Naive thymus-derived CD4-positive, alpha-beta T cell (primary cell): ENCODE measurements at regions of chr3 and their contacts with region 1.

Region 1: DNA sequence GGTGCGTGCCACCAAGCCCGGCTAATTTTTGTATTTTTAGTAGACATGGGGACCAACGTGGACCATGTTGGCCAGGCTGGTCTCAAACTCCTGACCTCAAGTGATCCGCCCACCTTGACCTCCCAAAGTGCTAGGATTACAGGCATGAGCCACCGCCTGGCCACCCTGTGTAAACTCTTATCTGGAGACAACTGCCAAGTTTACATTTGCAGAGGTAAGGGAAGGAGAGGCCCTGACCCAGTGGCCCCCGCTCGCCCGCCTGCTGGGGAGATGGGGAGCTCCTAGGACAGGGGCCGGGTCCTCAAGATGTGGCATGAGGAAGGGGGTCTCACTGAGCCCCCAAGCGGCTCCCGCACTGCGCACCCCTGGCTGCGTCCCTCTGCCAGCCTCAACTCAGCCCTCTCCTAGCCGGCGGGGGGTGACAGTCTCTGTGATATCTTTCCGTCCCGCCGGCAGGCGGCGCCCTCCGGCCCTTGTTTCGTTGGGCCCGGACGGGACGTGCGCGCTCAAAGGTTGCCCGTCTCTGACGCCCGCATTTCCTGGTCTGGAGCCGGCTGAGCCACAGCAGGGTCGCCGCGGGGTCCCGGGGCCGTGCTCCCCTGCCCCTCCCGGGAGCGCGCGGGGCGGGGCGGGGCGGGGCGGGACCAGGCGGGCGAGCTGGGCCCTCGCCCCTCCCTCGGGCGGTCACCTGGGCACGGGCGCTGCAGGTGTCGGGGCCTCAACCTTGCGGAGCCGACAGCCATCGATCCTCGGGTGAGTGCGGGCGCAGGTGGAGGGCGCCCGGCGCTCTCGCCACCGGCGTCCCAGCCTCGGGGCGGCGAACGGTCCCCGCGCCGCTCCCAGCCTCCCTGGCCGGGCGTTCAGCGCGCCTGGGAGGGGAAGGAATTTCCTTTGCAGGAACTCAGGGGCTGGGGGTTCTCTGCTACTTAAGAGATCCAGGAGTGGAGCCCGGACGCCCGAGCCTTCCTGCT is at the start of gene GPR160:
- DNase-seq: peak; percentile 67 to 85 (median 80)
- ATAC-seq: peak; percentile 82
- H3K4me3 ChIP-seq: peak within 1 kb of the TSS; percentile 88
- H3K4me3 Mint-ChIP-seq: peak within 1 kb of the TSS; percentile 86 to 93 (median 90)
- H3K27ac ChIP-seq: peak within 1 kb of the TSS; percentile 63
- H3K27ac Mint-ChIP-seq: peak within 1 kb of the TSS; percentile 33 to 92 (median 82)
- H3K4me1 ChIP-seq: peaks cover 15 to 16% of the 10 kb centered on the region in 2 donors
- H3K4me1 Mint-ChIP-seq: peaks cover 24 to 66% (median 49%) of the 10 kb centered on the region in 7 donors
- H3K27me3 ChIP-seq: no peaks in the 10 kb centered on the region
- H3K27me3 Mint-ChIP-seq: peaks cover 0 to 6% (median 0%) of the 10 kb centered on the region in 5 donors
- total RNA-seq, gene GPR160: 6.1 to 44.3 (median 8.7) TPM

Region 2: GRCh38 chr3:169812332-169813235 is 225.2 kb before region 1 on chr3 and contains the starts of genes LRRC34 and LRRIQ4:
- CTCF ChIA-PET with region 1: no interaction called
- POLR2A ChIA-PET with region 1: no interaction called
- intact Hi-C with region 1: loop called (anchors 5 kb)
- DNase-seq: peak; percentile 43 to 72 (median 52)
- ATAC-seq: peak; percentile 72
- H3K4me3 ChIP-seq: peak within 1 kb of the TSS; percentile 85
- H3K4me3 Mint-ChIP-seq: peak within 1 kb of the TSS; percentile 79 to 91 (median 86)
- H3K27ac ChIP-seq: peak within 1 kb of the TSS; percentile 59
- H3K27ac Mint-ChIP-seq: peak within 1 kb of the TSS; percentile 3 to 92 (median 71)
- H3K4me1 ChIP-seq: peaks cover 4 to 6% of the 10 kb centered on the region in 2 donors
- H3K4me1 Mint-ChIP-seq: peaks cover 21 to 40% (median 25%) of the 10 kb centered on the region in 7 donors
- H3K27me3 ChIP-seq: no peaks in the 10 kb centered on the region
- H3K27me3 Mint-ChIP-seq: peaks cover 0 to 18% (median 2%) of the 10 kb centered on the region in 5 donors
- total RNA-seq, gene LRRC34: 0.30 to 3.7 (median 0.42) TPM
- total RNA-seq, gene LRRIQ4: 0.12 TPM in 1 of 5 experiments, not detected in the others

Region 3: DNA sequence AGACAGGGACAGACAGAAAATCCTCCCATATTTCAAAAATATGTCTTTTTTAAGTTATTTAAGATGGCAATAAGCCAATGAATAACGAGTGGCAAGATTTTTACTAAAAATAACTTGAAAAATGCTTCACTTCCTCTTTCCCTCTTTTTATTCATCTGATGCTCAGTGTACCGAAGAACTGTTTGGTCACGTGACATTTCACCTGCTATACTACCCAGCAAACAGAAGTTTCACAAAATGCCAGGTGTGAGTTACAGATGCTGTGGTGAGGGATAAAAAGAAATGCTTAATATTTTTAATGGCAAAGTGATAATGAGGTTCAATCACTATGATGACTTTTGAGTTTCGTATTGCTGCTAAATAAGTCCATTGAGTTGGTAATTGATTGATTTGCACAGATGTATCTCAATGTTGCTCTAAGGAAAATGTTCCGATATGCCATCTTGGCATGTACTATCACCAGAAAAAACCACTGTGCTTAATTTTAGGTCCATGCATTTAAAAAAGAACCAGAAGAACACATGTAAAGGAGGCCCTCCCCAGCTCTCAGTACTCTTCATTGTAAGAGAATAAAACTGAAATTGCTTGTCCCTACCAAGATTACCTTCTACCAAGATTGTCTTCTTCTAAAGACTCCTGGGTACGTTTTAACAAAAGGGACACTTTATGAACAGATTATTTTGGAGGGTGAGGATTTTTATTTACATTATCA is 97.1 kb before region 1 on chr3:
- CTCF ChIA-PET with region 1: no interaction called
- POLR2A ChIA-PET with region 1: no interaction called
- intact Hi-C with region 1: no loop called
- DNase-seq: peak in 3 of 9 donors; percentile 10 to 14 (median 11)
- ATAC-seq: no peak
- H3K4me3 ChIP-seq: no peak overlapping the region
- H3K4me3 Mint-ChIP-seq: peak overlapping the region in 5 of 10 donors; percentile 9 to 52 (median 34)
- H3K27ac ChIP-seq: no peak overlapping the region
- H3K27ac Mint-ChIP-seq: peak overlapping the region in 1 of 9 donors; percentile 38
- H3K4me1 ChIP-seq: no peaks in the 10 kb centered on the region
- H3K4me1 Mint-ChIP-seq: peaks cover 11 to 27% (median 20%) of the 10 kb centered on the region in 7 donors
- H3K27me3 ChIP-seq: no peaks in the 10 kb centered on the region
- H3K27me3 Mint-ChIP-seq: peaks cover 0 to 14% (median 8%) of the 10 kb centered on the region in 5 donors

Region 4: DNA sequence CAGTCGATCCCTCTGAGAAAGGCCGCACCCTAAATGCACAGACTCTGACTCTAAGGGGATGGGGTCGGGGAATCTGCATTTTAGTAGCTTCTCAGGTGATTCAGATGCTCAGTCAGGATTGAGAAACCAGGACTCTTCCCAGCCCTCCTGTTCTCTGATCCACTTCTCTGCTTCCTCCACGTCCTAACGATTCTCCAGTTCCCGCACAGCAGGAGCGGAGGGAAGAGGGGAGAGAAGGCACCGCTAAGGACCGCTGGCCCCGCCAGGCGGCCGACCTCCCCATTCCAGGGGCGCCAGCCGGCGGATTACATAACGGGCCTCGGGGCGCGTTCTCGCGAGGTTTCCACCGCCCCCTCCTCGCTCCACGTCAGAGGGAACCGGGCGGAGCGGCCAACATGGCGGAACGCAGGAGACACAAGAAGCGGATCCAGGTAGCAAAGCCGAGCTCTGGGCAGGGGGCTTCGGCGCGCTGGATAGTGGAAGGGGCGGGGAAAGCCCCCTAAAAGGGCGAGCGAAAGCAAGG is 71.3 kb before region 1 on chr3 and contains the start of gene SEC62:
- CTCF ChIA-PET with region 1: interaction called, 5 read pairs
- POLR2A ChIA-PET with region 1: interaction called, 62 read pairs
- intact Hi-C with region 1: loop called (anchors 1 to 2 kb)
- DNase-seq: peak; percentile 92 to 97 (median 96)
- ATAC-seq: peak; percentile 95
- H3K4me3 ChIP-seq: peak within 1 kb of the TSS; percentile 80
- H3K4me3 Mint-ChIP-seq: peak within 1 kb of the TSS; percentile 83 to 98 (median 96)
- H3K27ac ChIP-seq: peak within 1 kb of the TSS; percentile 95
- H3K27ac Mint-ChIP-seq: peak within 1 kb of the TSS; percentile 95 to 99 (median 99)
- H3K4me1 ChIP-seq: peaks cover 22 to 36% of the 10 kb centered on the region in 2 donors
- H3K4me1 Mint-ChIP-seq: peaks cover 37 to 81% (median 69%) of the 10 kb centered on the region in 7 donors
- H3K27me3 ChIP-seq: no peaks in the 10 kb centered on the region
- H3K27me3 Mint-ChIP-seq: peaks cover 0 to 2% (median 0%) of the 10 kb centered on the region in 5 donors
- total RNA-seq, gene SEC62: 75.2 to 156 (median 110) TPM

Region 5: DNA sequence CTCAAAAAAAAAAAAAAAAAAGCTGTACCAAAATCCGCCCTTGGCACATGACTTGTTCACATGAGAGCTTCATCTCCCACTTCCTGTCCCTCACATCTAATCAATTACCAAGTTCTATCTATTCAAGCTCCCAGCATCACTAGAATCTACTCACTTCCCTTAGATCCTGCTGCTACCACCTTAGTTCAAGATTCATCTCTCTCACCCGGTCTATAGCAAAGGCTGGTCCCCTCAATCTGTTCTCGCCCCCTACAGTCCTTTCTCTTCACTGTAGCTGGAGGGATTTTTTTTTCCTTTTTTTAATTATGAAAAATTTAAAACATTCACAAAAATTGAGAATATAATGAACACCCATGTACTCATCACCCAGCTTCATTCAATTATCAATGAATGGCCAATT is 16.7 kb before region 1 on chr3:
- CTCF ChIA-PET with region 1: interaction called, 10 read pairs
- POLR2A ChIA-PET with region 1: interaction called, 37 read pairs
- intact Hi-C with region 1: loop called in 1 of 2 experiments (anchors 1 kb)
- DNase-seq: peak in 6 of 9 donors; percentile 21 to 48 (median 40)
- ATAC-seq: peak; percentile 61
- H3K4me3 ChIP-seq: no peak overlapping the region
- H3K4me3 Mint-ChIP-seq: peak overlapping the region in 7 of 10 donors; percentile 3 to 71 (median 42)
- H3K27ac ChIP-seq: no peak overlapping the region
- H3K27ac Mint-ChIP-seq: peak overlapping the region in 8 of 9 donors; percentile 18 to 92 (median 73)
- H3K4me1 ChIP-seq: peaks cover 0 to 9% of the 10 kb centered on the region in 2 donors
- H3K4me1 Mint-ChIP-seq: peaks cover 10 to 64% (median 30%) of the 10 kb centered on the region in 7 donors
- H3K27me3 ChIP-seq: no peaks in the 10 kb centered on the region
- H3K27me3 Mint-ChIP-seq: peaks cover 0 to 17% (median 0%) of the 10 kb centered on the region in 5 donors

Region 6: GRCh38 chr3:170089862-170090600 is 52.3 kb after region 1 on chr3:
- CTCF ChIA-PET with region 1: no interaction called
- POLR2A ChIA-PET with region 1: no interaction called
- intact Hi-C with region 1: loop called in 1 of 2 experiments (anchors 2 kb)
- DNase-seq: no peak
- ATAC-seq: no peak
- H3K4me3 ChIP-seq: no peak overlapping the region
- H3K4me3 Mint-ChIP-seq: no peak overlapping the region
- H3K27ac ChIP-seq: peak overlapping the region; percentile 9
- H3K27ac Mint-ChIP-seq: peak overlapping the region in 7 of 9 donors; percentile 3 to 65 (median 54)
- H3K4me1 ChIP-seq: no peaks in the 10 kb centered on the region
- H3K4me1 Mint-ChIP-seq: peaks cover 0 to 19% (median 9%) of the 10 kb centered on the region in 7 donors
- H3K27me3 ChIP-seq: no peaks in the 10 kb centered on the region
- H3K27me3 Mint-ChIP-seq: no peaks in the 10 kb centered on the region

Region 7: DNA sequence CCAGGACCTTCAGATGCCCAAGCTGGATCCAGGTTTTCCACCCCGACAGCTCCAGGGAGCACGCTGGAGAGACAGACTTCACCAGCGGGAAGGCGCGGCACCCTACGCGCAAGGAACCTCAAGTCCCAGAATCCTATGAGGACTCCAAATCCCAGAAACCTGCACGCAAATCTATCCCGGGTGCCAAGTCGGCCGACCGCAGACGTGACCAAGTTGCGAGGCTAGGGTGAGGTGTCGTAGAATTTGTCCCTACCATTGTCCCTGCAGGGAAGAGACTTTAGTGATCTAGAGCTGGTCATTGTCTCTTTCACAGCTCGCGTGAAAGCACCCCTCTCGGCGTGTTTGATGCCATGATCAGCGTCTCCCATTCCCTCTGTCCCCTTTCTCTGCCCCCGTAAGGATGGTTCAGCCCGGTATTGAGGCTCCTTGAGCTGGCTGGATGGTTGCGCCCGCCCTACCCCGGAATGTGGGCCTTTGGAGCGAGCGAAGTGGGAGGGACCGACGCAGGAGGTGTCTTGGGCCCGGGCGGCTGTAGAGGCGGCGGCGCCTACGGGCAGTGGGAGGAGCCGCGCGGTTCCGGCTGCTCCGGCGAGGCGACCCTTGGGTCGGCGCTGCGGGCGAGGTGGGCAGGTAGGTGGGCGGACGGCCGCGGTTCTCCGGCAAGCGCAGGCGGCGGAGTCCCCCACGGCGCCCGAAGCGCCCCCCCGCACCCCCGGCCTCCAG is 184.3 kb after region 1 on chr3 and contains the start of gene PRKCI:
- CTCF ChIA-PET with region 1: no interaction called
- POLR2A ChIA-PET with region 1: no interaction called
- intact Hi-C with region 1: loop called (anchors 2 to 5 kb)
- DNase-seq: peak; percentile 63 to 88 (median 83)
- ATAC-seq: peak; percentile 96
- H3K4me3 ChIP-seq: peak within 1 kb of the TSS; percentile 98
- H3K4me3 Mint-ChIP-seq: peak within 1 kb of the TSS; percentile 75 to 97 (median 95)
- H3K27ac ChIP-seq: peak within 1 kb of the TSS; percentile 75
- H3K27ac Mint-ChIP-seq: peak within 1 kb of the TSS; percentile 82 to 97 (median 95)
- H3K4me1 ChIP-seq: peaks cover 0 to 3% of the 10 kb centered on the region in 2 donors
- H3K4me1 Mint-ChIP-seq: peaks cover 15 to 50% (median 38%) of the 10 kb centered on the region in 7 donors
- H3K27me3 ChIP-seq: no peaks in the 10 kb centered on the region
- H3K27me3 Mint-ChIP-seq: peaks cover 0 to 4% (median 0%) of the 10 kb centered on the region in 5 donors
- total RNA-seq, gene PRKCI: 14.7 to 26.2 (median 20.5) TPM

Region 8: GRCh38 chr3:170848292-170848917 is 810.7 kb after region 1 on chr3:
- CTCF ChIA-PET with region 1: no interaction called
- POLR2A ChIA-PET with region 1: no interaction called
- intact Hi-C with region 1: no loop called
- DNase-seq: no peak
- ATAC-seq: no peak
- H3K4me3 ChIP-seq: no peak overlapping the region
- H3K4me3 Mint-ChIP-seq: no peak overlapping the region
- H3K27ac ChIP-seq: no peak overlapping the region
- H3K27ac Mint-ChIP-seq: no peak overlapping the region
- H3K4me1 ChIP-seq: no peaks in the 10 kb centered on the region
- H3K4me1 Mint-ChIP-seq: no peaks in the 10 kb centered on the region
- H3K27me3 ChIP-seq: no peaks in the 10 kb centered on the region
- H3K27me3 Mint-ChIP-seq: peaks cover 9 to 43% (median 23%) of the 10 kb centered on the region in 5 donors

Region 9: DNA sequence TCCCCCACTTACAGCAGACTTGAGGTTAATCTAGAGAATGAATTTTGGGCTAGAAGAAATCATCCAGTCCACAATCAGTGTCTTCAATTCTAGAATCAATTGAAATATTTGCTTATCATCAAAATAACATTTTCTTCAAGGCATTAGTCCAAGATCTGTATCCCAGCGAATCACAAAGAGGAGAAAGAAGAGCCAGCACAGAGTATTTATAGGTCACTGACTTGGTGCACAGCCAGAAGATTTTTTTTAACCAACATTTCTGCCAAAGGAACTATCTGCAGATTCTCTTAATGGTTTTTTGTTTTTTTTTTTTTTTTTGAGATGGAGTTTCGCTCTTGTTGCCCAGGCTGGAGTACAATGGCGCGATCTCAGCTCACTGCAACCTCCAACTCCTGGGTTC is 1244.3 kb after region 1 on chr3:
- CTCF ChIA-PET with region 1: no interaction called
- POLR2A ChIA-PET with region 1: no interaction called
- intact Hi-C with region 1: no loop called
- DNase-seq: no peak
- ATAC-seq: no peak
- H3K4me3 ChIP-seq: no peak overlapping the region
- H3K4me3 Mint-ChIP-seq: no peak overlapping the region
- H3K27ac ChIP-seq: no peak overlapping the region
- H3K27ac Mint-ChIP-seq: no peak overlapping the region
- H3K4me1 ChIP-seq: peaks cover 11 to 25% of the 10 kb centered on the region in 2 donors
- H3K4me1 Mint-ChIP-seq: peaks cover 33 to 89% (median 78%) of the 10 kb centered on the region in 7 donors
- H3K27me3 ChIP-seq: no peaks in the 10 kb centered on the region
- H3K27me3 Mint-ChIP-seq: no peaks in the 10 kb centered on the region